ENCODE measurements at regions of chr10 and their contacts with region 1.

Region 1: DNA sequence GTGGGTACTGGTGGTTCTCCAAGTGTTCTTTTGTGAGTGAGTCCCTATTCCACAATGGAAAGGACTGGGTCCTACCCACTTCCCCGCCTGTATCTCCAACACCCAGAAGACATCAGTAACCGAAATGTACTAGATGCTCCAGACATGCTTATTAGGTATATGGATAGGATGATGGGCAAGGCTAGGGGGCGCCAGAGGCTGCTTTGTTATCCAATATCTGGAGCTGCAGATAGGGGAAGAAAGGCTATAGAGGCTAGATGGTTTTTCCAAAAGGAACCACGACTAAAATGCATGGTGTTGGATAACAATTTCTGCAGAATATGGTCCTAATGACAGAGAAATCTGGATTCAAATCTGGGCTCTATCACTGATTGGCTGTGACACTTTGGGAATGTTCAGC is 56.2 kb upstream of the TM9SF3 start:
- DNase-seq: peak; percentile 92
- H3K4me3 Mint-ChIP-seq: no peak overlapping the region
- H3K27ac Mint-ChIP-seq: no peak overlapping the region
- H3K4me1 Mint-ChIP-seq: peaks cover 14% of the 10 kb centered on the region
- H3K27me3 Mint-ChIP-seq: no peaks in the 10 kb centered on the region

Region 2: GRCh38 chr10:96395931-96396877 is 246.8 kb before region 1 on chr10:
- CTCF ChIA-PET with region 1: interaction called, 5 read pairs
- intact Hi-C with region 1: loop called (anchors 5 kb)
- DNase-seq: peak; percentile 75
- H3K4me3 Mint-ChIP-seq: peak overlapping the region; percentile 28
- H3K27ac Mint-ChIP-seq: no peak overlapping the region
- H3K4me1 Mint-ChIP-seq: no peaks in the 10 kb centered on the region
- H3K27me3 Mint-ChIP-seq: peaks cover 15% of the 10 kb centered on the region

Region 3: GRCh38 chr10:96719850-96720421 is 77.0 kb after region 1 on chr10:
- CTCF ChIA-PET with region 1: interaction called, 8 read pairs
- intact Hi-C with region 1: loop called (anchors 1 kb)
- DNase-seq: peak; percentile 64
- H3K4me3 Mint-ChIP-seq: peak overlapping the region; percentile 84
- H3K27ac Mint-ChIP-seq: peak overlapping the region; percentile 22
- H3K4me1 Mint-ChIP-seq: peaks cover 6% of the 10 kb centered on the region
- H3K27me3 Mint-ChIP-seq: peaks cover 3% of the 10 kb centered on the region

Region 4: GRCh38 chr10:96765406-96766240 is 122.7 kb after region 1 on chr10:
- CTCF ChIA-PET with region 1: interaction called, 5 read pairs
- intact Hi-C with region 1: loop called (anchors 1 kb)
- DNase-seq: peak; percentile 86
- H3K4me3 Mint-ChIP-seq: no peak overlapping the region
- H3K27ac Mint-ChIP-seq: no peak overlapping the region
- H3K4me1 Mint-ChIP-seq: peaks cover 2% of the 10 kb centered on the region
- H3K27me3 Mint-ChIP-seq: no peaks in the 10 kb centered on the region

Region 5: DNA sequence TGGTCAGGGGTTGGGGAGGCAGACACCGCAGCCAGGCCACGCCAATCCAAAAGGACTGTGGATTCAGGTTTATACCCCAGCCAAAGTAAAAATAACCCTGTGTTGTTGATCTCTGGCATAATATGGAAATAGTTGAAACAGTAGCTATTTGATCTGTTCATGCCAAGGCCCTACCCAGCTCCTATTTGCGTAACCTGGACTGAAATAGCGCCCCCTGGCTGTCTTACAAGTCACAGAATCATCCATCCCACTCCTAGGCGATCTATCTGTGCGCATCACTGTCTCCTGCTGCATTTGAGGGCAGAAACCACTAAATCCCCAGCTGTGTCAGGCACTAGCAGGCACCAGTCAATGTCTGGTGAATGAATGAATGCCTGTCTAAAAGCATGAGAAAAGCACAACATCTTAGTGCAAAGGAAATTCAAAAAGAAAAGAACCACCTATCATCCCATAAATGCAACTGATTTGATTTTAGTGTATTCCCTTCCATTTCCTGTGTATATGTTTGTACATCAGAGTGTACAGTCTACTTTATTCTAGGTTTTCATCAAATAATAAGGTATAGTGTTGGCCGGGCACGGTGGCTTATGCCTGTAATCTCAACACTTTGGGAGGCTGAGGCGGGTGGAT is 382.8 kb after region 1 on chr10:
- CTCF ChIA-PET with region 1: interaction called, 11 read pairs
- intact Hi-C with region 1: loop called (anchors 1 kb)
- DNase-seq: peak; percentile 80
- H3K4me3 Mint-ChIP-seq: no peak overlapping the region
- H3K27ac Mint-ChIP-seq: no peak overlapping the region
- H3K4me1 Mint-ChIP-seq: peaks cover 2% of the 10 kb centered on the region
- H3K27me3 Mint-ChIP-seq: no peaks in the 10 kb centered on the region

Measured in activated naive CD4-positive, alpha-beta T cell treated with anti-CD3 and anti-CD28 coated beads for 36 hours (primary cell).